ENCODE measurements at regions of chr17 and their contacts with region 1.

Region 1: GRCh38 chr17:72991651-72992050 is 100.8 kb downstream of the SLC39A11 start:
- DNase-seq: no peak
- H3K4me3 Mint-ChIP-seq: no peak overlapping the region
- H3K27ac Mint-ChIP-seq: no peak overlapping the region
- H3K4me1 Mint-ChIP-seq: peaks cover 13% of the 10 kb centered on the region
- H3K27me3 Mint-ChIP-seq: no peaks in the 10 kb centered on the region

Region 2: DNA sequence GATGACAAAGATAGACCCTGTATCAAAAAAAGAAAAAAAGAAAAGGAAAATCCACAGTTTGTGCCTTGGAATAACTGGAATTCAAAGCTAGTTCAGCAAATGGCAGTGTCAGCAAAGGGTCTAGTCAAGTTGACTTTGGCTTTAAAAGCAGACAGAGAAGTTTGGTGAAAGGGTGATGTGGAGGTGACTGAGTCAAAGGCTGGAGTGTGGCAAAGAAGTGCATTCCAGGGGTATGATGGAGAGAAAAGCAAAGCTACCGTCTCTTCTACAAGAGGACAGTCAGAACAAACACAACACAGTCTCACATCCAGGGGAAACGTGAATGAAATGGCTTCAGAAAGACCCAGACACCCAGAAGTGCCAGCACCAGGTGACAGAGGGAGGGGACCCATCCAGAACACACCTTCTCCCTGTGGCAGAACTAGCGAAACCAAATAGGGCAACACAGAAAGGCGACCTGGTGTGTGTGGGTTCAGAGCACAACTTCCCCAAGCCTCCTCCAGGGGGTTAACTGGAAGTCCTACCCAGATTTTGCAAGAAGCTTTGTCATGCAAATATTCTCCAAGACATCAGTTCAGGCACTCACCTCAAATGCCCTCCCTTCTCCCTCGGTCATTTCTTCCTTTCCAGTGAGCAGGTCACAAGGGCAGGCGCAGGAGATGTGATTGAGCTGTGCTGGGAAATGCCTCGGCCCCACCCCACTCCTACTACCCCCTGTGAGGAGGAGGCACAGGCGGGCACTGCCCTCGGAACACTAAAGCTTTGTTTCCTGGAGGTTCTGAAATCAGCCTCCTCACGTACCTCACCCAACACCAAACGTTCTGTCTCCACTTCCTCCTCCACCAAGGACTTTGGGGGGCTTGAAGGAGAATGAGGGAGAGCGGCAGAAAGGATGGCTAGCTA is 388.9 kb before region 1 on chr17:
- intact Hi-C with region 1: no loop called
- DNase-seq: no peak
- H3K4me3 Mint-ChIP-seq: no peak overlapping the region
- H3K27ac Mint-ChIP-seq: no peak overlapping the region
- H3K4me1 Mint-ChIP-seq: no peaks in the 10 kb centered on the region
- H3K27me3 Mint-ChIP-seq: peaks cover 27% of the 10 kb centered on the region

Region 3: DNA sequence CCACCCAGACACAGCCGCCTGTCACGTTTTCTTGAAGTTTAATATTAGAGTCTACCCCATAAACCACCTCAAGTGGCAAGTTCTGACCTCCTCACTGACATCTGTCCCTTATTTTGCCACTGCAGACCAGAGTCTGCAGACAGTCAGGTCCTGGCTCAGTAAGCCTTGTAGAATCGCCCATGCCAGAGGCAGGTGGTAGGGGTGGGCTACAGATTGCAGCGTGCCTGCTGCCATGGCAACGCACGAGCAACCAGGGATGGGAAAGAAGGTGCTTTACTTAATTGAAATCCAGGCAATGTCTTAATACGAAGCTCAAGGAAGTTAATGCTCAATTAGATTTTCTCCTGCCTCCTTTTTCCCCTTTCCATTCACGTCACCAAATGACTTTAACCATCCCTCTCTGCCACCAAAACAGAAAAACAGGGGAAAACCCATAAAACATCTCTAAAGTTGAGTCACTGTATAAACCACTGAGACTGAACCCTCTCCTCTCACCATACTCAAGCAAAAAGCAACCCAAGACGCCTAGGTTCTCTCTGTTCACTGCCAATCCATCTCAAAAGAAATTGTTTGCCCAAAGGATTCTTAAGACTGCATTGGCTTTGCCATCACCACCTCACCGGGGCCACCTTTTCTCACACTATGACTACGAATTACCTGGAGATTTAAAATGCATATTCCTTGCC is 128.0 kb before region 1 on chr17:
- intact Hi-C with region 1: loop called (anchors 2 kb)
- DNase-seq: peak; percentile 55
- H3K4me3 Mint-ChIP-seq: peak overlapping the region; percentile 16
- H3K27ac Mint-ChIP-seq: peak overlapping the region; percentile 70
- H3K4me1 Mint-ChIP-seq: peaks cover 29% of the 10 kb centered on the region
- H3K27me3 Mint-ChIP-seq: no peaks in the 10 kb centered on the region

Region 4: GRCh38 chr17:72916991-72917390 is 74.7 kb before region 1 on chr17:
- intact Hi-C with region 1: no loop called
- DNase-seq: no peak
- H3K4me3 Mint-ChIP-seq: no peak overlapping the region
- H3K27ac Mint-ChIP-seq: no peak overlapping the region
- H3K4me1 Mint-ChIP-seq: no peaks in the 10 kb centered on the region
- H3K27me3 Mint-ChIP-seq: no peaks in the 10 kb centered on the region

Region 5: DNA sequence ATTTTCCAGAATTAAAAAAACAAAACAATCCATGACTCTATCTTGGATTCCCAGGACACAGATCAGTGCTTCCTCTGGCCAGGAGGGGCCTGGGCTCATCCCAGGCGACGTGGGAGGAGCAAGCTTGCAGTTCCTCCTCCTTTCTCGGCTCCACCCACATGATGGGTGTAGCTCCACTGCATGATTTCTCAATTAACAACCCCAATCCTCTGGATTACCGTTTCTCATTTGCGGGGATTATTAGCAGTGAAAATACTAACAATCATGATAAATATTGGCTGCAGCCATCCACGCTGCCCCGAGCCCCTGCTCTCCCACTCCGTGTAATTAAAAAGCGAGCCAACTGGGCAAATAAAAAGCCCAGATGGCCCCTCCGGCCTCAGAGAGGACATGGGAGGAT is 699.0 kb after region 1 on chr17:
- intact Hi-C with region 1: no loop called
- DNase-seq: no peak
- H3K4me3 Mint-ChIP-seq: no peak overlapping the region
- H3K27ac Mint-ChIP-seq: no peak overlapping the region
- H3K4me1 Mint-ChIP-seq: peaks cover 2% of the 10 kb centered on the region
- H3K27me3 Mint-ChIP-seq: peaks cover 1% of the 10 kb centered on the region

Measured in activated CD4-positive, alpha-beta T cell treated with anti-CD3 and anti-CD28 coated beads, Interleukin-2, amount 10 ng/mL, durations not matched to agents 24 days and 14 days (primary cell).